Naive thymus-derived CD4-positive, alpha-beta T cell (primary cell): ENCODE measurements at regions of chr13 and their contacts with region 1.

Region 1: DNA sequence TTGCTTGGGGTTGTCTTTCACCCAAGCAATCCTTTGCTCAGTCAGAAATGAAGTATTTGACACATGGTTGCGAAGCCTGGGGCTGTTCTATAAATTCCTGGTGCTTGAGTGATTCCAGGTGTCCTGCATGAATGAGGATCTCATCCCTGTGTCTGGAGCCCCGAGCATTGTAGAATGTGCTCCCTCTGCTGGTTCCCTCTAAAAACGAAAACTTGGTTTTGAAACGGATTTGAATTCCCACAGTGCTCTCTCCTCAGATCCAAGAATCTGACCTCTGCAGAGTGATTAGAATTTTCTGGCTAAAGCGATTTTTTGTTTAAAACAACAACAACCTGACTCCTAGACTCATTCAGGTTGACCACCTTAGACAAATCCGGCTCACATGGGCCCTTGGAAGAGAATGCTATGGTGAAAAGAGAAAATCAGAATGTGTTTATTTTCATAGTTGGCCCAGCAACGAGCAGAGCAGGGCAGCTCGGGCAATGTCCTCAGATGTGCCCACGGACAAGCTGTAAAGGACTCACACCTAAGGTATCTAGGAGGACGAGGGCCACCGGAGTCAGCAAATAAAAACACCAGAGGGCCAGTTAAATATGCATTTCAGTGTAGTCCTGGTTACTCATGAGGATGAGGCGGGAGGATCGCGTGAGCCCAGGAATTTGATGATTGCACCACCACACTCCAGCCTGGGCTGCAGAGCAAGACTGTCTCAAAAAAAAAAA is 8.7 kb upstream of the ATP12A start:
- DNase-seq: peak in 1 of 9 donors; percentile 22
- ATAC-seq: peak; percentile 64
- H3K4me3 ChIP-seq: no peak overlapping the region
- H3K4me3 Mint-ChIP-seq: peak overlapping the region in 7 of 10 donors; percentile 7 to 58 (median 46)
- H3K27ac ChIP-seq: no peak overlapping the region
- H3K27ac Mint-ChIP-seq: peak overlapping the region in 1 of 9 donors; percentile 59
- H3K4me1 ChIP-seq: no peaks in the 10 kb centered on the region
- H3K4me1 Mint-ChIP-seq: peaks cover 7 to 12% (median 9%) of the 10 kb centered on the region in 7 donors
- H3K27me3 ChIP-seq: no peaks in the 10 kb centered on the region
- H3K27me3 Mint-ChIP-seq: peaks cover 6 to 49% (median 14%) of the 10 kb centered on the region in 5 donors

Region 2: GRCh38 chr13:24280720-24281119 is 390.8 kb before region 1 on chr13:
- CTCF ChIA-PET with region 1: no interaction called
- POLR2A ChIA-PET with region 1: no interaction called
- intact Hi-C with region 1: no loop called
- DNase-seq: no peak
- ATAC-seq: peak; percentile 57
- H3K4me3 ChIP-seq: no peak overlapping the region
- H3K4me3 Mint-ChIP-seq: no peak overlapping the region
- H3K27ac ChIP-seq: no peak overlapping the region
- H3K27ac Mint-ChIP-seq: peak overlapping the region; percentile 24 to 87 (median 75)
- H3K4me1 ChIP-seq: peaks cover 30 to 34% of the 10 kb centered on the region in 2 donors
- H3K4me1 Mint-ChIP-seq: peaks cover 46 to 78% (median 69%) of the 10 kb centered on the region in 7 donors
- H3K27me3 ChIP-seq: no peaks in the 10 kb centered on the region
- H3K27me3 Mint-ChIP-seq: no peaks in the 10 kb centered on the region

Region 3: DNA sequence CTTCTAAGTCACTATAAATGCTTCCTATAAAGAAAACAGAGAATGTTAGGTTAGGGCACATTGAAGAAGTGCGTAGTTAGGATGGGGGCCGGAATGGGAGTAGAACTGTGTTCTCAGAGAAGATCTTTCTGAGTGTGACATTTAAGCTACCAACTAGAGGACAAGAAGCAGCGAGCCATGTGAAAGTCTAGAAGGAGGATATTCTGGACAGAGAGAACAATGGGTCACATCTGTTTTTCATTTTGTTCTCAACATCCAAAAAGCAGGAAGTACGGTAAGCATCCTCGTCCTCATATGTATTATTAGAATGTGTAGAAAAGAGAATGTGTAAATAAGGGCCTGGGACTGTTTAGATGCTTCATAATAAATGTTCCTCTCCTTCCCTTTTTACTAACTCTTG is 114.5 kb before region 1 on chr13:
- CTCF ChIA-PET with region 1: no interaction called
- POLR2A ChIA-PET with region 1: no interaction called
- intact Hi-C with region 1: no loop called
- DNase-seq: no peak
- ATAC-seq: no peak
- H3K4me3 ChIP-seq: no peak overlapping the region
- H3K4me3 Mint-ChIP-seq: no peak overlapping the region
- H3K27ac ChIP-seq: no peak overlapping the region
- H3K27ac Mint-ChIP-seq: no peak overlapping the region
- H3K4me1 ChIP-seq: no peaks in the 10 kb centered on the region
- H3K4me1 Mint-ChIP-seq: peaks cover 0 to 12% (median 9%) of the 10 kb centered on the region in 7 donors
- H3K27me3 ChIP-seq: no peaks in the 10 kb centered on the region
- H3K27me3 Mint-ChIP-seq: peaks cover 44 to 61% (median 57%) of the 10 kb centered on the region in 5 donors

Region 4: DNA sequence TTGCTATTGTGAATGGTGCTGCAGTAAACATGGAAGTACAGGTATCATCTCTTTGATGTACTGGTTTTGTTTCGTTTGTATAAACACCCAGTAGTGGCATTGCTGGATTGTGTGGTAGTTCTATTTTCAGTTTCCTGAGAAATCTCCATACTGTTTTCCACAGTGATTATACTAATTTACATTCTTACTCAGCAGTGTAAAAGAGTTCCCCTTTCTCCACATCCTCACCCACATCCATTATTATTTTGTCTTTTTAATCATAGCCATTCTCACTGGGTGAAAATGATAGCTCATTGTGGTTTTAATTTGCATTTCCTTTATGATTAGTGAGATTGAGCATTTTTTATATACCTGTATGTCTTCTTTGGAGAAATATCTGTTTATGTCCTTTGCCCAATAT is 96.7 kb before region 1 on chr13:
- CTCF ChIA-PET with region 1: interaction called, 8 read pairs
- POLR2A ChIA-PET with region 1: no interaction called
- intact Hi-C with region 1: loop called (anchors 1 to 2 kb)
- DNase-seq: no peak
- ATAC-seq: no peak
- H3K4me3 ChIP-seq: no peak overlapping the region
- H3K4me3 Mint-ChIP-seq: no peak overlapping the region
- H3K27ac ChIP-seq: no peak overlapping the region
- H3K27ac Mint-ChIP-seq: no peak overlapping the region
- H3K4me1 ChIP-seq: no peaks in the 10 kb centered on the region
- H3K4me1 Mint-ChIP-seq: peaks cover 0 to 3% (median 0%) of the 10 kb centered on the region in 7 donors
- H3K27me3 ChIP-seq: no peaks in the 10 kb centered on the region
- H3K27me3 Mint-ChIP-seq: peaks cover 7 to 18% (median 12%) of the 10 kb centered on the region in 5 donors

Region 5: GRCh38 chr13:24716011-24716410 is 44.5 kb after region 1 on chr13:
- CTCF ChIA-PET with region 1: no interaction called
- POLR2A ChIA-PET with region 1: no interaction called
- intact Hi-C with region 1: no loop called
- DNase-seq: no peak
- ATAC-seq: no peak
- H3K4me3 ChIP-seq: no peak overlapping the region
- H3K4me3 Mint-ChIP-seq: no peak overlapping the region
- H3K27ac ChIP-seq: no peak overlapping the region
- H3K27ac Mint-ChIP-seq: peak overlapping the region in 1 of 9 donors; percentile 8
- H3K4me1 ChIP-seq: no peaks in the 10 kb centered on the region
- H3K4me1 Mint-ChIP-seq: peaks cover 0 to 8% (median 0%) of the 10 kb centered on the region in 7 donors
- H3K27me3 ChIP-seq: no peaks in the 10 kb centered on the region
- H3K27me3 Mint-ChIP-seq: peaks cover 0 to 29% (median 4%) of the 10 kb centered on the region in 5 donors